ENCODE measurements at regions of chr1 and their contacts with region 1.

Region 1: GRCh38 chr1:32240140-32240951 is 6.7 kb upstream of the FAM167B start:
- DNase-seq: peak; percentile 69 to 91
- H3K4me3 ChIP-seq: peak overlapping the region; percentile 60 to 61
- H3K27ac ChIP-seq: peak overlapping the region; percentile 77 to 87
- H3K4me1 ChIP-seq: peaks cover 0 to 22% (median 19%) of the 10 kb centered on the region in 4 donors
- H3K27me3 ChIP-seq: no peaks in the 10 kb centered on the region
- CTCF ChIP-seq: peak; percentile 28 to 29

Region 2: DNA sequence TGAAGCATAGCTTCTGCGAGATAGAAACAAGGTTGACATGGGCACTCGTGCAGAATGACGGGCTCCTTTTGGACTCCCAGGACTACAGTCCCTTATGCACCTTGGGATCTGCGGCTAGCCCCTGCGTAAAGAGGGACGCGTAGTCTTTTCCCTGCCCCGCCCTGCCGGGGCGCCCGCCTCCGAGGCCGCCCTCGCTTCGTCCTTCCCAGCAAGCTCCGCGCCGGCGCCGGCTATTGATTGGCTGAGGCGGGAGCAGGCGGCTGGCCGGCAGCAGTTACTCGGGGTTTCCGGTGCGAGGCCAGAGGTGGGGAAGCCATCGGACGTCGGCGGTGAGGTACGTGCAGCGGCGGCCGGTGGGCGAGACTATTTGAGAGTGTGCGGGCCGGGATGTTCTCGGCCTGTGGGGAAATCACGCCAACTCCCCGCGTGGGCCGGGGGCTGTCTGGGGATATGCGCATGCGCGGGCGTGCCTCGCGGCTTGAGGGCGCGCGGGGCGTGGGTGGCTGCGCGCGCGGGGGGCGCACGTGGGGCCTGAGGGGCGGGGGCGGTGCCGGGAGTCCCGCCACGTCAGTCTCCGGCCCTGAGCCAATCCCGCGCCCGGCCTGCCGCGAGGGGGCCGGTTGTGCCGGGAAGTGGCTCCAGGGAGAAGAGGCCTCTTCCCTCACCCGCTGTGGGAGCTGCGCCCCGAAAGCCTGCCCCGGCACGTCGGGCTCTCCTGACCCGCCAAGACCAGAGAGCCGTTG is 60.7 kb before region 1 on chr1 and contains the start of gene TXLNA:
- intact Hi-C with region 1: loop called (anchors 10 kb)
- DNase-seq: peak; percentile 96 to 97
- H3K4me3 ChIP-seq: peak within 1 kb of the TSS; percentile 64 to 81
- H3K27ac ChIP-seq: peak within 1 kb of the TSS; percentile 90 to 93
- H3K4me1 ChIP-seq: peaks cover 0 to 49% (median 38%) of the 10 kb centered on the region in 4 donors
- H3K27me3 ChIP-seq: no peaks in the 10 kb centered on the region
- CTCF ChIP-seq: no peak

Region 3: GRCh38 chr1:32205401-32206370 is 34.7 kb before region 1 on chr1 and contains the start of gene IQCC:
- intact Hi-C with region 1: loop called (anchors 5 kb)
- DNase-seq: peak; percentile 78 to 91
- H3K4me3 ChIP-seq: peak within 1 kb of the TSS; percentile 52 to 71
- H3K27ac ChIP-seq: peak within 1 kb of the TSS; percentile 53 to 60
- H3K4me1 ChIP-seq: peaks cover 0 to 33% (median 22%) of the 10 kb centered on the region in 4 donors
- H3K27me3 ChIP-seq: no peaks in the 10 kb centered on the region
- CTCF ChIP-seq: no peak

Region 4: DNA sequence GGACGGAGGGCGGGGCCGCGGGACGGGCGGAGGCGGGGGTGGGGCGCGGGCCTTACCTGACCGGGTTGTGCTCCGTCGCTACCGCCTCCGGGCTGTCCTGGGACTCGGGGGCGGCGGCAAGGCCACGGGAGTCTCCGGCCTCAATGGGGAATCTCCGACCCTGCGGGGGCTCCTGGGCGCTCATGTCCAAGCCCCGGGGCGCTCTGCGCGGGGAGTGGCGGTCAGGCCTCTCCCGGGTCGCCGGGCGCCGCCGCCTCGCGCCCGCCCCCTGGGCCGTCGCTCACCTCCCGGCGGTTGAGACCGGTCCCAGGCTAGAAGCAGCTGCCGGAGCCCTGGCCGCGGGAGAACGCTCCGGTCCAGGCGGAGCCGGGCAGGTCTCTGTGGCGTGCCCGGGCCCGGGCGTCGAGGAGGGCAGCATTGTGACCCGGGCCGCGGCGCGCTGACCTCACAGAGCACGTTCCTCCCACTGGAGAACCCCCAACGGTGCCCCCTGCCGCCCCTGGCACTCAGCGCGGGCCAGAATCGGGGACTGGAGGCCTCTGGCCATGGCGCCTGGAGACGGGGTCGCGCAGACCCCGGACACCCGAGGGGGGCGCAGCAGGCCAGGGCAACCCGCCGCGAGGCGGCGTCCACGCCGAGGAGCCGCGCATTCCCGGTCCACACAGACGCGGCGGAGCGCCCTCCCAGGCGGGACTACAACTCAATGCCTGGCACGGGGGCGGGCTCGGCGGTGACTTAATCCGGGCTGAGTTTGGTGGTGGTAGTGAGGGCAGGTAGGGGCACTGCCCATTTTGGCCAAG is 121.5 kb after region 1 on chr1:
- intact Hi-C with region 1: no loop called
- DNase-seq: peak; percentile 59 to 73
- H3K4me3 ChIP-seq: peak overlapping the region; percentile 36 to 54
- H3K27ac ChIP-seq: peak overlapping the region; percentile 44 to 56
- H3K4me1 ChIP-seq: peaks cover 0 to 20% (median 14%) of the 10 kb centered on the region in 4 donors
- H3K27me3 ChIP-seq: no peaks in the 10 kb centered on the region
- CTCF ChIP-seq: no peak

Region 5: GRCh38 chr1:32485554-32486255 is 245.4 kb after region 1 on chr1:
- intact Hi-C with region 1: no loop called
- DNase-seq: peak in 1 of 2 donors; percentile 5
- H3K4me3 ChIP-seq: no peak overlapping the region
- H3K27ac ChIP-seq: no peak overlapping the region
- H3K4me1 ChIP-seq: no peaks in the 10 kb centered on the region
- H3K27me3 ChIP-seq: no peaks in the 10 kb centered on the region
- CTCF ChIP-seq: no peak

Measured in tibial artery (tissue), 4 donors.